PC-9 (cell line): ENCODE measurements at regions of chr7 and their contacts with region 1.

Region 1: DNA sequence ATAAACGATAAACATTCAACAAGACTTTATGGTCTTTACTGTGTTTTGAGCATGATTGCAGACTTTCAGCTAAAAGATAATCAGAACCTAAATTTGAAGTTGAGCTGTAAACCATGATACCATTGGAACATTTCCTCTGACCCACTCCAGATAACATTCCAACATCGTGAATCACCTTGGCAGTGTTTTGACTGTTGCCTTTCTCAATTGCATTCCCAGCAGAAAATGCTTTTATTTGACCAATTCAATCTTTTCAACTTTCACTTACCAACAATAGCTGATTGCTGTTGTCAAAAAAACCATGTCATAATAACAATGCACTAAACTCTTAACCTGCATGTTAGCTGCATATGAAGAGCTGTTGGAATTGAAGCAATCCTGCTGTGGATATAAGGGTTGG is 165.5 kb downstream of the MDFIC start:
- DNase-seq: peak; percentile 51 to 63
- H3K4me3 ChIP-seq: 0 out of 2 replicates have a peak overlapping the region, but pooled peaks have one; percentile 10
- H3K27ac ChIP-seq: peak overlapping the region; percentile 49
- H3K4me1 ChIP-seq: peaks cover 28% of the 10 kb centered on the region
- H3K27me3 ChIP-seq: no peaks in the 10 kb centered on the region
- CTCF ChIP-seq: no peak

Region 2: GRCh38 chr7:114901781-114902180 is 185.7 kb before region 1 on chr7:
- CTCF ChIA-PET with region 1: no interaction called
- POLR2A ChIA-PET with region 1: interaction called, 6 read pairs
- intact Hi-C with region 1: loop called (anchors 5 kb)
- DNase-seq: peak; percentile 79 to 88
- H3K4me3 ChIP-seq: 0 out of 2 replicates have a peak overlapping the region, but pooled peaks have one; percentile 12
- H3K27ac ChIP-seq: peak overlapping the region; percentile 22
- H3K4me1 ChIP-seq: peaks cover 17% of the 10 kb centered on the region
- H3K27me3 ChIP-seq: no peaks in the 10 kb centered on the region
- CTCF ChIP-seq: no peak

Region 3: GRCh38 chr7:115127399-115128021 is 40.1 kb after region 1 on chr7:
- CTCF ChIA-PET with region 1: no interaction called
- POLR2A ChIA-PET with region 1: interaction called, 6 read pairs
- intact Hi-C with region 1: loop called (anchors 5 kb)
- DNase-seq: peak; percentile 5 to 47
- H3K4me3 ChIP-seq: no peak overlapping the region
- H3K27ac ChIP-seq: no peak overlapping the region
- H3K4me1 ChIP-seq: peaks cover 5% of the 10 kb centered on the region; the same call in 1 of the 2 replicates
- H3K27me3 ChIP-seq: no peaks in the 10 kb centered on the region
- CTCF ChIP-seq: no peak

Region 4: GRCh38 chr7:115211171-115211570 is 123.7 kb after region 1 on chr7:
- CTCF ChIA-PET with region 1: no interaction called
- POLR2A ChIA-PET with region 1: no interaction called
- intact Hi-C with region 1: loop called (anchors 5 kb)
- DNase-seq: no peak
- H3K4me3 ChIP-seq: no peak overlapping the region
- H3K27ac ChIP-seq: no peak overlapping the region
- H3K4me1 ChIP-seq: no peaks in the 10 kb centered on the region
- H3K27me3 ChIP-seq: no peaks in the 10 kb centered on the region
- CTCF ChIP-seq: no peak

Region 5: GRCh38 chr7:115230882-115231571 is 143.6 kb after region 1 on chr7:
- CTCF ChIA-PET with region 1: no interaction called
- POLR2A ChIA-PET with region 1: interaction called, 4 read pairs
- intact Hi-C with region 1: loop called (anchors 5 kb)
- DNase-seq: peak; percentile 50 to 93
- H3K4me3 ChIP-seq: no peak overlapping the region
- H3K27ac ChIP-seq: peak overlapping the region; percentile 80
- H3K4me1 ChIP-seq: peaks cover 23% of the 10 kb centered on the region
- H3K27me3 ChIP-seq: no peaks in the 10 kb centered on the region
- CTCF ChIP-seq: no peak